CD4-positive, alpha-beta memory T cell (primary cell): ENCODE measurements at regions of chr19 and their contacts with region 1.

Region 1: DNA sequence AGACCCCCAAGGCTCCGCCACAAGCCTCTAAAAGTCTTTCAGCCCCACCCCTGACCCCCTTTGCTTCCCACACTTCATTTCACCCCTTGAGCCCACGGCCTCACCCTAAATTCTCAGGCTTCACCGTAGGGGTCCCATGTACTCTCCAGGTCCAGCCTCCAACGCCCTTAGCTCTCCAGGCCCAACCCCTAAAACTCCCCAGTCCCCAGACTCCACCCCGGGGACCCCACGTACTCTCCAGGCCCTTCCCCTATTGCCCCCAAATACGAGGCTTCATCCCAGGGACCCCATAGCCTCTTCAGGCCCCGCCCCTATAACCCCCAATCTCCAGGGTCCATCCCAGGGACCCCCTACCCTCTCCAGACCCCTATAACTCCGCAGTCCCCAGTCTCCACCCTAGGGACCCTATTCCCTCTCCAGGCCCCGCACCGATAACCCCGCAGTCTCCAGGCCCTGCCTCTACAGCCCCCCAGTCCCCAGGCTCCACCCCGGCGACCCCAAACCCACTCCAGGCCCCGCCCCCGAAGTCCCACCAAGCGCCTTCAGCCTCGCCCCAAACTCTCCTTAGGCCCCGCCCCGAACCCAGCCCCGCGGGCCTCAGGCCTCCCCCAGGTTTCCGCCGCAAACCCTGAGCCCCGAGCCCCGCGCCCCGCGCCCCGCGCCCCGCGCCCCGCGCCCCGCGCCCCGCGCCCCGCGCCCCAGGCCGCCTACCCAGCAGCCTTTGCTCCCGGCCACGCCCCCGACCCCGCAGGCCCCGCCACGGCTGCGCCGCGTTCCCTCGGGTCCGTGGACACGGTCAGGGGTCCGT is 540 bp downstream of the MED16 start:
- DNase-seq: no peak
- H3K4me3 ChIP-seq: peak overlapping the region; percentile 36 to 76
- H3K4me3 Mint-ChIP-seq: peak overlapping the region; percentile 84 to 95 (median 92)
- H3K27ac ChIP-seq: peak overlapping the region; percentile 80
- H3K27ac Mint-ChIP-seq: peak overlapping the region; percentile 38 to 100 (median 88)
- H3K4me1 ChIP-seq: peaks cover 32% of the 10 kb centered on the region
- H3K4me1 Mint-ChIP-seq: peaks cover 7 to 47% (median 11%) of the 10 kb centered on the region in 4 donors
- H3K27me3 ChIP-seq: no peaks in the 10 kb centered on the region
- H3K27me3 Mint-ChIP-seq: peaks cover 0 to 3% of the 10 kb centered on the region in 2 donors

Region 2: DNA sequence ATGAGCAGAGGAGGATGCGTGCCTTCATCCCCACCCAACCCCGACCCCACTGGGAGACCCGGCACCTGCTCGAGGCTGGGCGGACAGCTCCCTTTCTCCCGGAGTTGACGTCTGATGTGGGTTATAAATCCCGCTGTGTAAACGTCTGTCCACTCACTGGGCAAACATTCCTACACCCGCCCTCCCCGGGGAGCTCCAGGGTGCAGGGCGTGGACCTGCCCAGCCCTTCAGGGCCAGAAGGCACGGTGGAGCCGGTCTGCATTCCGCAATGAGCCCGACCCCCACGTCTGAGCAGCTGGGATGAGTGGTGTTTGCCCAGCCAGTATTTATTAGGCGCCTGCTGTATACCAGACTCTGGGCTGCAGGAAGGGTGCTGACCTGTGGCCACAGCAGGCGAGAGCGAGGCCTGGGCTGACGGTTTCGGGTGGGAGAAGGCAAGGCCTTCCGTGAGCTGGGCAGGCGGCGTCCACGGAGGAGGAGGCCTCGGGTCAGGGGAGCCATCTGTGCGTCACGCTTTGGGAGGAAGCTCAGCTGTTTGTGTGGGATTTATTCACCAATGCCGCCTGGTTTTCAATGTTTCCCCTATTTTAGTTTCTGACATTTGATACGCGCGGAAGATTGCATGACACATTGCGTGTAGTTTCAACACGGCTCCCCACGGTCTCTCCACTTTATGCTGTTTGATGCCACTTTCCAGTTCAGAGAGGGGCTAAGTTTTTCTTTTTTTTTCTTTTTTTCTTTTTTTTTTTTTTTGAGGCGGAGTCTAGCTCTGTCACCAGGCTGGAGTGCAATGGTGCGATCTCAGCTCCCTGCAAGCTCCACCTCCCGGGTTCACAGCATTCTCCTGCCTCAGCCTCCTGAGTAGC is 139.6 kb before region 1 on chr19:
- CTCF ChIA-PET with region 1: no interaction called
- POLR2A ChIA-PET with region 1: no interaction called
- intact Hi-C with region 1: no loop called
- DNase-seq: no peak
- H3K4me3 ChIP-seq: no peak overlapping the region
- H3K4me3 Mint-ChIP-seq: no peak overlapping the region
- H3K27ac ChIP-seq: no peak overlapping the region
- H3K27ac Mint-ChIP-seq: no peak overlapping the region
- H3K4me1 ChIP-seq: no peaks in the 10 kb centered on the region
- H3K4me1 Mint-ChIP-seq: no peaks in the 10 kb centered on the region
- H3K27me3 ChIP-seq: no peaks in the 10 kb centered on the region
- H3K27me3 Mint-ChIP-seq: no peaks in the 10 kb centered on the region

Region 3: GRCh38 chr19:843180-843835 is 49.1 kb before region 1 on chr19:
- CTCF ChIA-PET with region 1: no interaction called
- POLR2A ChIA-PET with region 1: no interaction called
- intact Hi-C with region 1: no loop called
- DNase-seq: no peak
- H3K4me3 ChIP-seq: no peak overlapping the region
- H3K4me3 Mint-ChIP-seq: no peak overlapping the region
- H3K27ac ChIP-seq: no peak overlapping the region
- H3K27ac Mint-ChIP-seq: no peak overlapping the region
- H3K4me1 ChIP-seq: peaks cover 3% of the 10 kb centered on the region
- H3K4me1 Mint-ChIP-seq: peaks cover 0 to 10% (median 6%) of the 10 kb centered on the region in 4 donors
- H3K27me3 ChIP-seq: peaks cover 4% of the 10 kb centered on the region
- H3K27me3 Mint-ChIP-seq: peaks cover 15 to 24% of the 10 kb centered on the region in 2 donors

Region 4: DNA sequence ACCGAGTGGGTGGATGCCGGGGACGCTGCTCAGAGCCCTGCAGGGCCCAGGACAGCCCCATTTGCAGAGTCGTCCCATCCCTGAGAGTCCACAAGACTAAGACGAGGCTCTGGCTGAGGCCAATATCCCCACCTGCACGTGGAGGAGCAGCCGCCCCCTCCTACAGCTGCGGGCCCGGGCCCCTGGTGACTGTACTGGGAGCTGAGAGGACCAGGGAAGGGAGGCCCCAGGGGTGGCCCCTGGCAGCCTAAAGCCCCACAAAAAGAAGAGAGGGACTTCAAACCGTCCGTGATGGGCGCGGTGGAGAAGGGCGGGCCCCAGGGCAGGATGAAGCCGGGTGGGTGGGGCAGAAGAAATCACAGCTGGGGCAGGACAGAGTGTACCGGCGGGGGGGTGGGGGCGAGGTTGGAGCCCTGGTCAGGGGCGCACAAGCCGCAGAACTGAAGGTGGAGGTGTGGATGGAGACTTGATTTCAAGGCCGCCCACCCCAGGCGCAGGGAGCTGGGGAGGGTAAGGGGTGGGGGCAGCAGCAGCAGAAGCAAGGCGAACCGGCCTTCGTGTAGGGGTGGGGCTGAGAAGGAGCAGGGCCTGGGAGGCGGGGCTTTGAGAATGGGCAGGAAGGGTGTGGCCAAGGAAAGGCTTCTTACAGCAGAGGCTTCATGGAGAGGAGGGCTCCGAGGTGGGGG is 20.0 kb before region 1 on chr19:
- CTCF ChIA-PET with region 1: interaction called, 3 read pairs
- POLR2A ChIA-PET with region 1: interaction called, 47 read pairs
- intact Hi-C with region 1: loop called (anchors 1 kb)
- DNase-seq: peak; percentile 84 to 93 (median 91)
- H3K4me3 ChIP-seq: peak overlapping the region in 1 of 2 donors; percentile 51
- H3K4me3 Mint-ChIP-seq: peak overlapping the region; percentile 75 to 92 (median 84)
- H3K27ac ChIP-seq: peak overlapping the region; percentile 55
- H3K27ac Mint-ChIP-seq: peak overlapping the region; percentile 88 to 98 (median 97)
- H3K4me1 ChIP-seq: peaks cover 13% of the 10 kb centered on the region
- H3K4me1 Mint-ChIP-seq: peaks cover 4 to 16% (median 9%) of the 10 kb centered on the region in 4 donors
- H3K27me3 ChIP-seq: no peaks in the 10 kb centered on the region
- H3K27me3 Mint-ChIP-seq: no peaks in the 10 kb centered on the region

Region 5: GRCh38 chr19:879711-880438 is 12.6 kb before region 1 on chr19:
- CTCF ChIA-PET with region 1: interaction called, 8 read pairs
- POLR2A ChIA-PET with region 1: interaction called, 47 read pairs
- intact Hi-C with region 1: no loop called
- DNase-seq: no peak
- H3K4me3 ChIP-seq: no peak overlapping the region
- H3K4me3 Mint-ChIP-seq: no peak overlapping the region
- H3K27ac ChIP-seq: no peak overlapping the region
- H3K27ac Mint-ChIP-seq: peak overlapping the region in 1 of 7 donors; percentile 29
- H3K4me1 ChIP-seq: no peaks in the 10 kb centered on the region
- H3K4me1 Mint-ChIP-seq: peaks cover 0 to 4% (median 0%) of the 10 kb centered on the region in 4 donors
- H3K27me3 ChIP-seq: no peaks in the 10 kb centered on the region
- H3K27me3 Mint-ChIP-seq: no peaks in the 10 kb centered on the region

Region 6: GRCh38 chr19:907183-907853 is 14.9 kb after region 1 on chr19:
- CTCF ChIA-PET with region 1: interaction called, 11 read pairs
- POLR2A ChIA-PET with region 1: interaction called, 252 read pairs
- intact Hi-C with region 1: loop called (anchors 1 kb)
- DNase-seq: no peak
- H3K4me3 ChIP-seq: no peak overlapping the region
- H3K4me3 Mint-ChIP-seq: peak overlapping the region; percentile 43 to 89 (median 62)
- H3K27ac ChIP-seq: peak overlapping the region; percentile 89
- H3K27ac Mint-ChIP-seq: peak overlapping the region; percentile 93 to 100 (median 100)
- H3K4me1 ChIP-seq: peaks cover 70% of the 10 kb centered on the region
- H3K4me1 Mint-ChIP-seq: peaks cover 19 to 72% (median 44%) of the 10 kb centered on the region in 4 donors
- H3K27me3 ChIP-seq: no peaks in the 10 kb centered on the region
- H3K27me3 Mint-ChIP-seq: no peaks in the 10 kb centered on the region

Region 7: GRCh38 chr19:913080-913748 is 20.8 kb after region 1 on chr19 and contains the start of gene R3HDM4:
- CTCF ChIA-PET with region 1: interaction called, 11 read pairs
- POLR2A ChIA-PET with region 1: interaction called, 252 read pairs
- intact Hi-C with region 1: loop called (anchors 1 kb)
- DNase-seq: peak; percentile 82 to 85 (median 85)
- H3K4me3 ChIP-seq: peak within 1 kb of the TSS; percentile 58 to 69
- H3K4me3 Mint-ChIP-seq: peak within 1 kb of the TSS; percentile 82 to 90 (median 86)
- H3K27ac ChIP-seq: peak within 1 kb of the TSS; percentile 94
- H3K27ac Mint-ChIP-seq: peak within 1 kb of the TSS; percentile 88 to 95 (median 93)
- H3K4me1 ChIP-seq: peaks cover 57% of the 10 kb centered on the region
- H3K4me1 Mint-ChIP-seq: peaks cover 13 to 42% (median 28%) of the 10 kb centered on the region in 4 donors
- H3K27me3 ChIP-seq: no peaks in the 10 kb centered on the region
- H3K27me3 Mint-ChIP-seq: peaks cover 0 to 4% of the 10 kb centered on the region in 2 donors
- total RNA-seq, gene R3HDM4: 153 to 160 TPM

Region 8: DNA sequence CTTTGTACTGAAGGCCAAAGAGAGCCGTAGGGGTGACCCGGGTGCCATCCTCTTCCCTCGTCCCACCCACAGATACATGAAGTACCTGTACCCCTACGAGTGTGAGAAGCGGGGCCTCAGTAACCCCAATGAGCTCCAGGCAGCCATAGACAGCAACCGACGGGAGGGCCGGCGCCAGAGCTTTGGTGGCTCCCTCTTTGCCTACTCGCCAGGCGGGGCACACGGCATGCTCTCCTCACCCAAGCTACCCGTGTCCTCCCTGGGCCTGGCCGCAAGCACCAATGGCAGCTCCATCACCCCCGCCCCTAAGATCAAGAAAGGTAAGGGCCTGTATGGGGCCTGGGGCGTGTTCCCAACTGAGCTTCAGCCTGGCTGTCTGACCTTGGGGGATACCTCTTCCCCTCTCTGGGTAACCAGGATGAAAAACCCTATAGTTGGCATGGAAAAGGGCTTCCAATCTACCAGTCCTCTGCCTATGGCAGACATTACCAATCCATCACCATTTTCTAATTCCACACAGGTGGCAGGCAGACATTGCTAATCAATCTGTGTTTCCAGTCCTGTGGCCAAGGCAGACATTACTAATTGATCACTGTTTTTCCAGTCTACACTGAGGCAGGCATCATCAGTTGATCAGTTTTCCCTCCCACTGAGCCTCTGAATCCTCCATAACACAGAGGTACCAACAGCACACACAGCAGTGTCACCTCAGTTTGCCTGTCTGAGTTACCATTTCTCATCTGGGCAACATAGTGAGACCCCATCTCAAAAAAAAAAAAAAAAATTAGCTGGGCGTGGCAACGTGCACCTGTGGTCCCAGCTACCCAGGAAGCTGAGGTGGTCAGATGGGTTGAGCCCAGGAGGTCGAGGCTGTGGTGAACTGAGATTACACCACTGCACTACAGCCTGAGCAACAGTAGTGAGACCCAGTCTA is 72.6 kb after region 1 on chr19:
- CTCF ChIA-PET with region 1: no interaction called
- POLR2A ChIA-PET with region 1: no interaction called
- intact Hi-C with region 1: no loop called
- DNase-seq: peak in 1 of 5 donors; percentile 29
- H3K4me3 ChIP-seq: no peak overlapping the region
- H3K4me3 Mint-ChIP-seq: no peak overlapping the region
- H3K27ac ChIP-seq: no peak overlapping the region
- H3K27ac Mint-ChIP-seq: no peak overlapping the region
- H3K4me1 ChIP-seq: no peaks in the 10 kb centered on the region
- H3K4me1 Mint-ChIP-seq: peaks cover 0 to 5% (median 2%) of the 10 kb centered on the region in 4 donors
- H3K27me3 ChIP-seq: no peaks in the 10 kb centered on the region
- H3K27me3 Mint-ChIP-seq: no peaks in the 10 kb centered on the region

Region 9: GRCh38 chr19:984165-984967 is 91.9 kb after region 1 on chr19 and contains the start of gene WDR18:
- CTCF ChIA-PET with region 1: interaction called, 3 read pairs
- POLR2A ChIA-PET with region 1: interaction called, 10 read pairs
- intact Hi-C with region 1: no loop called
- DNase-seq: peak; percentile 79 to 87 (median 81)
- H3K4me3 ChIP-seq: peak within 1 kb of the TSS; percentile 65 to 69
- H3K4me3 Mint-ChIP-seq: peak within 1 kb of the TSS; percentile 89 to 96 (median 92)
- H3K27ac ChIP-seq: peak within 1 kb of the TSS; percentile 75
- H3K27ac Mint-ChIP-seq: peak within 1 kb of the TSS; percentile 84 to 96 (median 90)
- H3K4me1 ChIP-seq: peaks cover 24% of the 10 kb centered on the region
- H3K4me1 Mint-ChIP-seq: peaks cover 4 to 18% (median 12%) of the 10 kb centered on the region in 4 donors
- H3K27me3 ChIP-seq: no peaks in the 10 kb centered on the region
- H3K27me3 Mint-ChIP-seq: no peaks in the 10 kb centered on the region
- total RNA-seq, gene WDR18: 53.9 to 60.3 TPM